Activated naive CD4-positive, alpha-beta T cell treated with anti-CD3 and anti-CD28 coated beads for 36 hours (primary cell): ENCODE measurements at regions of chr5 and their contacts with region 1.

Region 1: GRCh38 chr5:172188033-172188892 is at the start of gene STK10:
- DNase-seq: peak; percentile 92
- H3K4me3 Mint-ChIP-seq: peak within 1 kb of the TSS; percentile 91
- H3K27ac Mint-ChIP-seq: peak within 1 kb of the TSS; percentile 92
- H3K4me1 Mint-ChIP-seq: peaks cover 32% of the 10 kb centered on the region
- H3K27me3 Mint-ChIP-seq: no peaks in the 10 kb centered on the region
- total RNA-seq, gene STK10: 44.7 to 55.1 TPM

Region 2: DNA sequence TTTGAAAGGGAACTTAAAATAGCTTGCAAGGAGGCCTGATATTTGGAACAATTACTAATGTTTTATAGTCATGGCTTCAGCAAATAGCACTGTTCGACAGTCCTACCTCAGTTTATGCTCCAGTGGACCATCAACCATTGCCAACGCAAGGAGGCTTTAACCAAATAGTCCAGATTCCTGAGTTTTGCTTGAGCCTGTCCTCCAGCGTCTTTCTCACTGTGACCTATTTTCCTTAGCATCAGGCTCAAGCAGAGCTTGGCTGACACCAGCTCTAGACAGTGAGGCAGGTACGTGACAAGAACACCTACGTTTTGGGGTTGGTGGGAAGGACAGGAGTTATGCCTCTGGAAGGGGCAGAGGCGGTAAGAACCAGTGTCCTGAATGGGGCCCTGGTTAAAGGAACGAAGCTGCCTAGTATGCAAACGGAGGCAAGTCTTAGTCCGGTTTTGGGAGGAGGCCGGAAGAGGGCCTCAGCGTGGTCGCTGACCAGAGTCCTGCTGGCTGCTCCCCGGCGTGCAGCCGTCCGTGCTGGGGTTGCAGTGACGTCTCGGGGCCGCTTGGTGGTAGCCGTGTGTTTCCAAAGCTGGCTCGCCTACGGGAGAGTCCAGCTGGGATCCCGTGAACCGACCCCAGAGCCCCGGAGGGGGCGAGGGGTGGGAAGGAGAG is 769.8 kb before region 1 on chr5:
- CTCF ChIA-PET with region 1: no interaction called
- intact Hi-C with region 1: loop called (anchors 2 kb)
- DNase-seq: peak; percentile 71
- H3K4me3 Mint-ChIP-seq: peak overlapping the region; percentile 53
- H3K27ac Mint-ChIP-seq: no peak overlapping the region
- H3K4me1 Mint-ChIP-seq: peaks cover 13% of the 10 kb centered on the region
- H3K27me3 Mint-ChIP-seq: peaks cover 25% of the 10 kb centered on the region

Region 3: GRCh38 chr5:172065501-172065990 is 122.7 kb before region 1 on chr5:
- CTCF ChIA-PET with region 1: interaction called, 8 read pairs
- intact Hi-C with region 1: loop called (anchors 1 kb)
- DNase-seq: no peak
- H3K4me3 Mint-ChIP-seq: no peak overlapping the region
- H3K27ac Mint-ChIP-seq: no peak overlapping the region
- H3K4me1 Mint-ChIP-seq: peaks cover 56% of the 10 kb centered on the region
- H3K27me3 Mint-ChIP-seq: no peaks in the 10 kb centered on the region

Region 4: GRCh38 chr5:172150514-172151425 is 37.5 kb before region 1 on chr5:
- CTCF ChIA-PET with region 1: interaction called, 5 read pairs
- intact Hi-C with region 1: loop called (anchors 1 kb)
- DNase-seq: peak; percentile 38
- H3K4me3 Mint-ChIP-seq: peak overlapping the region; percentile 64
- H3K27ac Mint-ChIP-seq: peak overlapping the region; percentile 91
- H3K4me1 Mint-ChIP-seq: peaks cover 77% of the 10 kb centered on the region
- H3K27me3 Mint-ChIP-seq: no peaks in the 10 kb centered on the region

Region 5: DNA sequence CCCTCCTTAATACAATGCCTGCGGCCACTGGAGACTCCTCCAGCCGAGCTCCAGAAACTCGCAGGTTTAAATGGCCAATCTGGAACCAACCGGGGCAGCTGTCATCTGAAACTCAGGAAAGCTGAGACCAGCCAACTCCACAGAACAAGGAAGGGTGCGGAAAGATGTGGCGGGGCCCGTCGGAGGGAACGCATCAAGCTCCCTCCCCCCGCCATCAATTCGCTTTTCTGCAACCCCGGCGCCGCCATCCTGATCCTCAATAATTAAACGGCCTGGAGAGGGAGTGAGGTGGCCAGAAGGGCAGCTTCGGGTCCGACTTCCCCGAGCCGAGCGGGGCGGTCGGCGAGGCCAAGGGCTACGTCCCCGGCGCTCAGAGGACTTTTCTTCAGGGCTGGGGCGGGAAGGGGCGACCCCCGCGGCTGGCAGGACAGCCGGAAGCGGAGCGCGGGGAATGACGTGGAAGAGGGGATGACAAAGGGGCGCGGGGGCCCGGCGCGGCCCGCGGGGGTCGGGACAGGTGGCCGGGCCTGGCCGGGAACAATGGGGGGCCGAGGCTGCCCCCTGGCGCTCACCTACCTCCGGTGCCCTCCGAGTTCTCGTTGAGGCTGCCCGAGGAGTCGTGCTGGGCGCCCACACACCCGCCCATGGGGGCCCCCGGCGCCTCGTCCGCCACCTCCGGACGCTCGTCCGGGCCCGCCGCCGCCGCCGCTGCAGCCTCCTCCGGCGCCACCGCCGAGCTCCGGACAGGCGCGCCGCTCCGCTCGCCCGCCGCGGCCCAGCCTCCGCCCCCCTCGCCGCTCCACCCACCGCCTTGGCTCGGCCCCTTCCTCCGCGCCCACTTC is 95.0 kb after region 1 on chr5 and contains the start of gene UBTD2:
- CTCF ChIA-PET with region 1: interaction called, 20 read pairs
- intact Hi-C with region 1: loop called (anchors 1 kb)
- DNase-seq: peak; percentile 70
- H3K4me3 Mint-ChIP-seq: peak within 1 kb of the TSS; percentile 81
- H3K27ac Mint-ChIP-seq: no peak within 1 kb of the TSS
- H3K4me1 Mint-ChIP-seq: peaks cover 19% of the 10 kb centered on the region
- H3K27me3 Mint-ChIP-seq: no peaks in the 10 kb centered on the region
- total RNA-seq, gene UBTD2: 2.3 to 2.6 TPM

Region 6: GRCh38 chr5:172764849-172765765 is 576.8 kb after region 1 on chr5:
- CTCF ChIA-PET with region 1: no interaction called
- intact Hi-C with region 1: loop called (anchors 5 kb)
- DNase-seq: peak; percentile 99
- H3K4me3 Mint-ChIP-seq: peak overlapping the region; percentile 77
- H3K27ac Mint-ChIP-seq: peak overlapping the region; percentile 87
- H3K4me1 Mint-ChIP-seq: peaks cover 43% of the 10 kb centered on the region
- H3K27me3 Mint-ChIP-seq: no peaks in the 10 kb centered on the region